RWPE1 (cell line): ENCODE measurements at regions of chr3 and their contacts with region 1.

Region 1: DNA sequence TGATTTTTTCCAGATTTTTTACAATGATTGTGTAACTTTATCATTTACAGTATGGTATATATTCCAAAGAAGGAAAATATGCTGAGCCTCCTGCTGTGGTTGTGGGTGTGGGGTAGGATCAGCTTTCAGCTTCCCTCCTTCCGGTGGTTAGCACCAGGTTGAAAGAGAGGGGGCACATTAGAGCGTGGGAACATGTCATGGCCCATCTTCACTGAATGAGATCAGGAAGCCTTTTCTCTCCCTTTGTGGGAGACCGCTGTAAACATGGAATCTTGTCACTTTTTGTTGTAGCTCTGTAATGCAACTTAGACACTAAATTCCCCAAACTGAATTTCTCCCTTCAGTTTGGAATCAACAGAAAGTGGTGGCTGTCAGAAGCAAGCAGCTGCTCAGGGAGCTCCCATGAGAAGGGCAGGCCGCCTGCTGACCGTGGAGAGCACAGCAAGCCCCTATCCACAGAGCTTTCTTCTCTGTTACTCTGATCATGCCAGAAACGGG is 86.7 kb upstream of the LIMD1 start:
- DNase-seq: no peak
- H3K27ac ChIP-seq: no peak overlapping the region
- CTCF ChIP-seq: no peak

Region 2: DNA sequence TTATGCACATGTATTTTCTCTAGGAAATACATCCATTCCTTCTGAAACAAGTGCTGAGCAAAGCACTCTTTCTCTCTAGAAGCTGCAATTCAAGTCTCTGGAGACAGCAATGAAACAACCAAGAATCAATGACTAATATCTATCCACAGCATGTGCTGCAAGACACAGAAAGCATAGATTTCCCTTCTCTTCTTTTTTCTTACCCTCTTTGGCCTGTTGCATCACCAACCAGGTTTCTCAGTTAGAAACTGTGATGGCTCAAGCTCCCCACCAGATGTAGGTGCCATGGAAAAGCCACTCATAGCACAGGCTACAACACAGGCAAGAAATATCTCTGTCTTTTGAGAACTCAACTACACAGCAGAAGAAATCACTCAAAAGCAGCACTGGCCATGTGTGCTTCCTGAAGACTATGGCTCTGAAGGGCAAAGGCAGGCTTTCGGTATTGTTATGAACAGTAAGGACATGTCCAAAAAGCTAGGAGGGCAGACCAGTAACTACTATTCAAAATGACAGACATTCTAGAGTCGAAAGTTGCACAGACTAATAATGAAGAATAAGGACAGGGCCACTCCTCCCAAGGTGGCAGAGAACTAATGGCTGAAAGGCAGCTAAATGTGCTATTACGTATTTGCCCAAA is 547.4 kb before region 1 on chr3:
- CTCF ChIA-PET with region 1: no interaction called
- POLR2A ChIA-PET with region 1: no interaction called
- DNase-seq: no peak
- H3K27ac ChIP-seq: no peak overlapping the region
- CTCF ChIP-seq: no peak

Region 3: GRCh38 chr3:45656575-45657363 is 148.9 kb after region 1 on chr3:
- CTCF ChIA-PET with region 1: interaction called, 11 read pairs
- POLR2A ChIA-PET with region 1: no interaction called
- DNase-seq: peak; percentile 85
- H3K27ac ChIP-seq: peak overlapping the region; percentile 53
- CTCF ChIP-seq: peak; percentile 89

Region 4: GRCh38 chr3:45665101-45665572 is 157.3 kb after region 1 on chr3:
- CTCF ChIA-PET with region 1: interaction called, 12 read pairs
- POLR2A ChIA-PET with region 1: no interaction called
- DNase-seq: no peak
- H3K27ac ChIP-seq: peak overlapping the region; percentile 67; the same call in 1 of the 2 replicates
- CTCF ChIP-seq: no peak; the same call in 1 of the 2 replicates